ENCODE measurements at regions of chr15 and their contacts with region 1.

Region 1: GRCh38 chr15:98647774-98648653 is at the start of gene IGF1R:
- DNase-seq: peak; percentile 91 to 95
- ATAC-seq: peak; percentile 91
- H3K4me3 ChIP-seq: peak within 1 kb of the TSS; percentile 99
- H3K27ac ChIP-seq: peak within 1 kb of the TSS; percentile 69 to 94
- H3K4me1 ChIP-seq: no peaks in the 10 kb centered on the region
- H3K27me3 ChIP-seq: no peaks in the 10 kb centered on the region
- total RNA-seq, gene IGF1R: 88.8 to 137 TPM

Region 2: DNA sequence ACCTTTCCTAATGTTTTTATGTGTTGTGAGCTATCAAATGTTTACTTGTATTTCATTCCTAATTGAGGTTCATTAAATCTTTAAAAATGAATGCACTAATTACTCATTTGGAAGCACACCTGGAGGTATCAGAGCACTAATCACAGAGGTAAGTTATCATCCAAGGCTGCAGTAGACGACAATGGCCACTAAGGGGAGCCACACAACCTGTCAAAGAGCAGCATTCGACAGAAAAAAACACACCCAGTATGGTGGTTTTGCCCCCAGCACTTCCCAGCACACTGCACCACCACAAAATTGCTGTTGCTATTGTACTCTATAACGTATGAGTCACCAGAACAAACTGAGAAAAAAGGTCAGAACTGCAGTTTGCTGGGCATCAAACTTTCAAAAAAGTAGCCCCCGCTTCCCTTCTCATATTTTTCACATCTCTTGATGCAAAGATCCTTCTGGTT is 205.6 kb before region 1 on chr15:
- intact Hi-C with region 1: loop called (anchors 5 to 10 kb)
- DNase-seq: no peak
- ATAC-seq: peak; percentile 88
- H3K4me3 ChIP-seq: no peak overlapping the region
- H3K27ac ChIP-seq: no peak overlapping the region
- H3K4me1 ChIP-seq: no peaks in the 10 kb centered on the region
- H3K27me3 ChIP-seq: no peaks in the 10 kb centered on the region

Region 3: GRCh38 chr15:98523912-98524662 is 123.9 kb before region 1 on chr15:
- intact Hi-C with region 1: loop called (anchors 2 to 5 kb)
- DNase-seq: peak in 1 of 2 donors; percentile 34
- ATAC-seq: no peak
- H3K4me3 ChIP-seq: no peak overlapping the region
- H3K27ac ChIP-seq: no peak overlapping the region
- H3K4me1 ChIP-seq: no peaks in the 10 kb centered on the region
- H3K27me3 ChIP-seq: no peaks in the 10 kb centered on the region

Region 4: DNA sequence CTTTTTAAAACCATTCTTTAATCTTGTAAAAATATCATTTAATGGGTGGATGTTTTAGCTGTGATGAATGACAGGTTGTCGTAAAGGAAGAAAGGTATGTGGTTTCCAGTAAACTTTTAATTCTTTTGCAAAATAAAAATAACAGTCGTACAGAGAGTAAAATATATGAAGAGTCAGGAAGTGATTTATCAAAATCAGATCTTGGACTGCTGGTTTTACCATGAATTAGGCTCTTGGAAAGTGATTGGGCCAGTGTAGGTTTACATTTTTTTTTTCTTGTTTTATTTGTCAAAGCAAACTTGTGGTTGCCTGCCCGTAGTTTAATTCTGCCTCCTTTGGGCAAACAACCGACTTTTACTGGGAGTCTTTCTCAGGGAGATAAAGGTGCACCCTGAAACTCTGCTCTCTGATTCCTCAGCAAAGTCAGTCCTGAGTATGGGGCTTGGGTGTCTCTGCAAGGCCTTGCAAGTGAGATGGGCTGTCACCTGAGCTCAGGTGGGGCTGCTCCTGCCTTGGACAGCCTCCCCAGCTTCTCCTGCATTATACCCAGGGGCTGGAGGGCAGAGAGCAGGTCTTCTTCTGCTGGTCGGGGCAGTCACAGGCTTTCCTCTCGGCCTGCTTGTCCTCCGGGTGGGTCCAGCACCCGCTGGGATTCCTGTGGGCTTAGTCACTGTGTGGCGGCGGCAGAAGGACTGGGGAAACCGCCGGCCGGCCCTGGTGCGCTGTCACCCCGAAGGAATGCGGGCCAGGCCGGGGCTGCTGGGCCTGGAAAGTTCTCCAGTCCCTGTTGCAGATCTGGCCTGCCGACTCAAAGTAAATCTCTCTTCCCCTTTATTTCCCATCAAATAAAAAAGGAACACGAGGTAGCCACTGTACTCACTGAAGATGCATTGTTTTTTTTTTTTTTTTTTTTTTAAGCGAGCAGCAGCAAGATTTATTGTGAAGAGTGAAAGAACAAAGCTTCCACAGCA is 79.4 kb after region 1 on chr15:
- intact Hi-C with region 1: loop called in 1 of 2 experiments (anchors 5 kb)
- DNase-seq: peak; percentile 93 to 97
- ATAC-seq: peak; percentile 96
- H3K4me3 ChIP-seq: no peak overlapping the region
- H3K27ac ChIP-seq: peak overlapping the region; percentile 98 to 100
- H3K4me1 ChIP-seq: peaks cover 14 to 15% of the 10 kb centered on the region in 2 donors
- H3K27me3 ChIP-seq: no peaks in the 10 kb centered on the region

Region 5: DNA sequence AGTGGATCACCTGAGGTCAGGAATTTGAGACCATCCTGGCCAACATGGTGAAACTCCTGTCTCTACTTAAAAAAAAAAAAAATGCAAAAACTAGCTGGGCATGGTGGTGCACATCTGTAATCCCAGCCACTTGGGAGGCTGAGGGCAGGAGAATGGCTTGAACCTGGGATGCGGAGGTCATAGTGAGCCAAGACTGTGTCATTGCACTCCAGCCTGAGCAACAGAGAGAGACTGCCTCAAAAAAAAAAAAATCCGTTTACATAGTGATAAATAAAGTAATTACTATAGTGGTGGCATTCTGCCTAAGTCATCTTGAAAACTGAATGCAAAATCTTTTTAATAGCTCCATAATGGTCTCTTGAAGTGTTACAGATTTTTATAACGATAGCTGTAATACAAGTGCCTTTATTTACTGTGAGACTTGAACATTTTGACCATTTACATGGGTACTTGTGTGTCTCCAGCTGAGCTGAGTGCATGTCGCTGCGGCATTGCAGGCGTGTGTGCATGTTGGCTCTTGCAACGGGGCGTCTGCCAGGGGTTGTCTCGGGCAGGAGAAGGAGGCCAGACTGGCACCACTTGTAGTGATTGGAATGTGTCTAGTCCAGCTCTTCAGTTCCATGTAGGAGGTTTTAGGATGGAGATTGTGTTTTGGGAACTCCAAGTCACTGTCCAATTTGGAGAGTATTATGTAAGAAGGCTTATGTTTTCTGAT is 112.3 kb after region 1 on chr15:
- intact Hi-C with region 1: no loop called
- DNase-seq: peak; percentile 67 to 79
- ATAC-seq: no peak
- H3K4me3 ChIP-seq: no peak overlapping the region
- H3K27ac ChIP-seq: no peak overlapping the region
- H3K4me1 ChIP-seq: peaks cover 0 to 6% of the 10 kb centered on the region in 2 donors
- H3K27me3 ChIP-seq: no peaks in the 10 kb centered on the region

Region 6: DNA sequence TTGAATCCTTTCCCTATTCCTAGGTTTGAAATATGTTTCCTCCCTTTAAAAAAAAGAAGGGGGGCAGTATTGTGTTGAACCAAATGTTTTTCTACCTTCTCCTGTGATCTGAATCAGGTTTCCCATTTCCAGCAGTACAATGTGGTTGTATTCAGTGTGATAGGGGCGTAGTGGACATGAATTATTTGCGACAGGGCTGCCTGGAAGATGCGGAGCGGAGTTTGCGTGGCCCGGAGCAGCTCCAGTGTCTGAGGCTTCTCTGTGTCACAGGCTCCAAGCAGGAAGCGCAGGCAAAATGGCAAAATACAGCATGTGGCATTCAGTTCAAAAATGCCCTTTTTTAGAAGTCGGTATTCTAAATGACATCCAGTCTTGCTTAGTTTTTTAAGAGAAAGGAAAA is 205.1 kb after region 1 on chr15:
- intact Hi-C with region 1: loop called (anchors 1 kb)
- DNase-seq: peak; percentile 93 to 95
- ATAC-seq: peak; percentile 93
- H3K4me3 ChIP-seq: peak overlapping the region; percentile 46 to 73
- H3K27ac ChIP-seq: peak overlapping the region in 1 of 2 donors; percentile 89
- H3K4me1 ChIP-seq: no peaks in the 10 kb centered on the region
- H3K27me3 ChIP-seq: no peaks in the 10 kb centered on the region

Region 7: DNA sequence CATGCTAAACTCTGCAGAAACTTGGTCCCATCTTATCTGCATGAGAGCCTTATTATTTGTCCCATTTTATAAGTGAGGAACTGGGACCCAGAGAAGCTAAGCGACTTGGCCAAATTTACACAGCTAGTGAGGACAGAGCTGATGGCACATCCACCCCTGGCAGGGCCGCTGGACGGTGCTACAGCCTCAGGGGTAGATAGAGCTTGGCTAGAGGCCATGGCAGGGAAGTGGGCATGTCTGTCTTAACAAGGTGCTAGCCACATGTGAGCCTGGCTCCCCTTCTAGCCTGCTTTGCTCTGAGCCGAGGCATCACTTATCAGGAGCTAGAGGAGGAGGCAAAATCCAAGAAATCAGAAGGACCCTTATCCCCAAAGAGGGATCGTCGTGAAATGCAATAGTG is 420.2 kb after region 1 on chr15:
- intact Hi-C with region 1: loop called in 1 of 2 experiments (anchors 5 kb)
- DNase-seq: no peak
- ATAC-seq: no peak
- H3K4me3 ChIP-seq: no peak overlapping the region
- H3K27ac ChIP-seq: no peak overlapping the region
- H3K4me1 ChIP-seq: no peaks in the 10 kb centered on the region
- H3K27me3 ChIP-seq: no peaks in the 10 kb centered on the region

Measured in aorta (tissue), 5 donors.